ENCODE measurements at regions of chr5 and their contacts with region 1.

Region 1: DNA sequence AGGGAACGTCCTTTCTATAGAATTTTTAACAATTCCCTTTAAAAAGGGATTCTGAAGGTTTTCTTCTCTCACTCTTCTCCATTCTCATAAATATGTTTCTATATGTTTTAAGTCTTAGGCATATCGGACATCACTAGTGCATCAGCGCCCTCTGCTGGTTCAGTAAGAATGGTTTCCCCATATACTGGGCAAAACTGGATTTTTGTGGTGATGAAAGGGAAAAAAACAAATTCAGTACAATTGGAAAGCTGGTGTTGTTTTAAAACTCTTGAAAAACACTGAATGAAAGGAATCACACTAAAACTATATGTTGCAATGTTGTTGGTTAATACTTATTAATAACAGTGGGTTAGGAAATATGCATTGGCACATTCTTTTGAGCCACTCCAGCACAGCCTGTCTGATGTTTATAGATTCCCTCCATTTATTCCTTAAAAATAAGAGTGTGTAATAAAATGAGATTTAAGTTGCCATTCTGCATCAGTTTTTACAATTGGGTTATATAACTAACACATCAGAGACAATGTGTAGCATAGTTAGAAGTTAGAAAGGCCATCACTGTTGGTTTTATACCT is 15.8 kb downstream of the CWC27 start:
- DNase-seq: peak; percentile 77 to 78
- ATAC-seq: peak; percentile 77
- H3K4me3 ChIP-seq: no peak overlapping the region
- H3K27ac ChIP-seq: no peak overlapping the region
- H3K4me1 ChIP-seq: no peaks in the 10 kb centered on the region
- H3K27me3 ChIP-seq: no peaks in the 10 kb centered on the region

Region 2: GRCh38 chr5:64629841-64630240 is 154.7 kb before region 1 on chr5:
- intact Hi-C with region 1: loop called (anchors 1 to 2 kb)
- DNase-seq: no peak
- ATAC-seq: no peak
- H3K4me3 ChIP-seq: no peak overlapping the region
- H3K27ac ChIP-seq: no peak overlapping the region
- H3K4me1 ChIP-seq: no peaks in the 10 kb centered on the region
- H3K27me3 ChIP-seq: peaks cover 0 to 2% of the 10 kb centered on the region in 2 donors

Region 3: GRCh38 chr5:64634997-64635686 is 149.4 kb before region 1 on chr5:
- intact Hi-C with region 1: loop called (anchors 1 to 2 kb)
- DNase-seq: no peak
- ATAC-seq: peak; percentile 68
- H3K4me3 ChIP-seq: no peak overlapping the region
- H3K27ac ChIP-seq: no peak overlapping the region
- H3K4me1 ChIP-seq: no peaks in the 10 kb centered on the region
- H3K27me3 ChIP-seq: peaks cover 0 to 2% of the 10 kb centered on the region in 2 donors